CD4-positive, alpha-beta T cell (primary cell): ENCODE measurements at regions of chr7 and their contacts with region 1.

Region 1: DNA sequence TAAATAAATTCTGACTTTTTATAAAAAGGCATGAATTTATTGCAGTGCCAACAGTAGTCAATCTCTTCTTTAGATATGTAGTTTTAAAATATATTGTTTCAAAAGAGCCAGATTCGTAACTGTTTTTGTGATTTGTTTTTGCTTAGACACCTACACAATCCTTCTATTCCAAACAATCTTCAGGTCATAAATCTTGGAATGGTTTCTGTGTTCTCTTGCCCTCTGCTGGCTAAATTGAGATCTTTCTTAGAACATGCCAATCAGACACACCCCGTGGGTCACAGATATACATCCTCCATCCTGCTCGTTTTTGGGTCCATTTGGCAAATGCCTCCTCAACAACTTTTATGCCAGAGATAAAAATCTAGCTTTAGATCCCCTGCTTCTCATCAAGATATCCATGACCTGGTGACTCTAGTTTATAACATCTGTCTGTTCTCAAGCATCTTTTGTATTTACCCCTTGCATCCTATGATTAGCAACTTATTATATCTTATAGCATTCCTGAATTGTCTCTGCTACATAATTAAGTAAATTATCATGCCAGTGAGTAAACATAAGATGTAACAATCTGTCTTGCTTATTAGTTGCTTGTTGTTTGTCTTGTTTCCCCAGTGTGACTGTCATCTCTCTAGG is 35.3 kb upstream of the IFRD1 start:
- DNase-seq: peak in 4 of 14 experiments; percentile 15 to 40 (median 35)
- ATAC-seq: no peak
- H3K4me3 ChIP-seq: no peak overlapping the region
- H3K4me3 Mint-ChIP-seq: no peak overlapping the region
- H3K27ac ChIP-seq: no peak overlapping the region
- H3K27ac Mint-ChIP-seq: no peak overlapping the region
- H3K4me1 ChIP-seq: no peaks in the 10 kb centered on the region
- H3K4me1 Mint-ChIP-seq: no peaks in the 10 kb centered on the region
- H3K27me3 ChIP-seq: no peaks in the 10 kb centered on the region
- H3K27me3 Mint-ChIP-seq: no peaks in the 10 kb centered on the region
- CTCF ChIP-seq: peak; percentile 53

Region 2: DNA sequence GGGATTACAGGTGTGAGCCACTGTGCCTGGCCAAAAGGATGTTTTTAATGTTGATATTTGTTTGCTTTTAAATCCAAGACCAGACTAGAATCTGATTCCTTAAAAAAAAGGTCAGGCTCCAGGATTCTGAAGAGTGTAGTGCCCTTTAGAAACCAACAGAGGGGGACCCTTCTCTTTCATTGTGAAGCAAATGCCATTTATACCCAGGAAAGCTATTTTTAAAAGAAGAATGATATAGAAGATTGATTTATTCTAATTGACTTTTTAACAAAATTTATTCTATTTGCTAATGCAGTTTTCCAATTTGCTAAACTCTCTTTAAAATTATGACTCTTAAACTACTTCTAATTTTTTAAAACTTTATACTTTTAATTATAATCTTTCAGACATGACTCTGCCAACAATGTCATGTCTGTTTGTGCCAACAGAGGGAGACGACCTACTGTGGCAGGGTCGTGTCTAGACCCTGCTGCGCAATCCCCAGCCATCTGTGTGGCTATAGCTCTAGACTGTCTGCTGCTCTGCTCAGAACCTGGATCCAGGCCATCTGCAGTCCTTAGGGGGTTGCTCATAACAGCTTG is 651.7 kb before region 1 on chr7:
- CTCF ChIA-PET with region 1: no interaction called
- POLR2A ChIA-PET with region 1: no interaction called
- intact Hi-C with region 1: loop called in 1 of 2 experiments (anchors 5 kb)
- DNase-seq: peak in 2 of 14 experiments; percentile 3 to 13
- ATAC-seq: no peak
- H3K4me3 ChIP-seq: no peak overlapping the region
- H3K4me3 Mint-ChIP-seq: no peak overlapping the region
- H3K27ac ChIP-seq: no peak overlapping the region
- H3K27ac Mint-ChIP-seq: no peak overlapping the region
- H3K4me1 ChIP-seq: no peaks in the 10 kb centered on the region
- H3K4me1 Mint-ChIP-seq: no peaks in the 10 kb centered on the region
- H3K27me3 ChIP-seq: no peaks in the 10 kb centered on the region
- H3K27me3 Mint-ChIP-seq: no peaks in the 10 kb centered on the region
- CTCF ChIP-seq: peak; percentile 15

Region 3: GRCh38 chr7:111958896-111959295 is 456.1 kb before region 1 on chr7:
- CTCF ChIA-PET with region 1: no interaction called
- POLR2A ChIA-PET with region 1: no interaction called
- intact Hi-C with region 1: loop called in 1 of 2 experiments (anchors 5 kb)
- DNase-seq: no peak
- ATAC-seq: no peak
- H3K4me3 ChIP-seq: no peak overlapping the region
- H3K4me3 Mint-ChIP-seq: no peak overlapping the region
- H3K27ac ChIP-seq: no peak overlapping the region
- H3K27ac Mint-ChIP-seq: no peak overlapping the region
- H3K4me1 ChIP-seq: no peaks in the 10 kb centered on the region
- H3K4me1 Mint-ChIP-seq: no peaks in the 10 kb centered on the region
- H3K27me3 ChIP-seq: no peaks in the 10 kb centered on the region
- H3K27me3 Mint-ChIP-seq: no peaks in the 10 kb centered on the region
- CTCF ChIP-seq: no peak

Region 4: GRCh38 chr7:112079673-112080072 is 335.3 kb before region 1 on chr7:
- CTCF ChIA-PET with region 1: no interaction called
- POLR2A ChIA-PET with region 1: no interaction called
- intact Hi-C with region 1: loop called in 1 of 2 experiments (anchors 10 kb)
- DNase-seq: no peak
- ATAC-seq: no peak
- H3K4me3 ChIP-seq: no peak overlapping the region
- H3K4me3 Mint-ChIP-seq: no peak overlapping the region
- H3K27ac ChIP-seq: no peak overlapping the region
- H3K27ac Mint-ChIP-seq: no peak overlapping the region
- H3K4me1 ChIP-seq: peaks cover 5% of the 10 kb centered on the region
- H3K4me1 Mint-ChIP-seq: no peaks in the 10 kb centered on the region
- H3K27me3 ChIP-seq: peaks cover 0 to 3% of the 10 kb centered on the region in 2 experiments
- H3K27me3 Mint-ChIP-seq: peaks cover 34% of the 10 kb centered on the region
- CTCF ChIP-seq: no peak